ENCODE measurements at regions of chr3 and their contacts with region 1.

Region 1: DNA sequence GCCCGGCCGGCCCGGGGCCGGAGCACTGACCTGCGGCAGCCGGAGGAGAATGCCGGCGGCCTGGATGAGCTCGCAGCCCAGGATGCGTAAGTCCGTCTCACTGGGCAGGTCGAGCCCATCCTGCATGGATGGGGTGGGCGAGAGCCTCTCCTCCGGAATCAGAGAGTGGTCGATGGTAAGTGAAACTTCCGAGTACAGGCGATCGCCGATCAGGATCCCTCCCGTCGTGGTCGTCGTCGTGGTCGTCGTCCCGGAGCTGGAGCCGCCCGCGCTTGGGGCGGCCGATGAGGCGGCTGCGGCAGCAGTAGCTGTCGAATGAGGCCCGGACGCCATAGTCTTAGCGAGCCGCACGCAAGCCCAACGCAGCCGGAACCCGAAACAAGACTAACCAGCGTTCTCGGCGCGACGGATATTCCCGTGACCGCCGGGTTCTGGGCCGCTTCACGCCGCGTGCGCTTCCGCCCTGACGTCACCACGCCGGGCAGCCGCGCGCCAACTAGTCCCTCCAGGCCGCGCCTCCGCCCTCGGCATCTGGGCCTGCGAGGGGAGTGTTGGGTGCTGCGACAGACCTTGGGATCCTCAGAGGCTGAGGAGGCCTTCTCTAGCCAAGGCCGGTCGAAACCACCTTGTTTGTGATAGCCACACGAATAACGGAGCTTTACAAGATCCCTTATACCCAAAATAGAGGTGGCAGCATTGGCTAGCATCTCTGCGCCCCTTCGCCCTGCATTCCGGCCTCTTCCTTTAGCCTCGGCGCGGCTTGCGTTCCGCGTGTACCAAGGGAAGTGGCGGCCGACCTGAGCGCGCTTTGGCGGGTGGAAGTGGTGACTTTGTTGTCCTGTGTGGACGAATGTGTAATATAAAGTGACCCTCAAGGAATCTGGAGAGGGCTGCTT is at the start of gene CCNL1:
- DNase-seq: peak; percentile 86 to 98 (median 89)
- ATAC-seq: peak; percentile 92
- H3K4me3 ChIP-seq: peak within 1 kb of the TSS; percentile 91
- H3K27ac ChIP-seq: peak within 1 kb of the TSS; percentile 96
- H3K4me1 ChIP-seq: peaks cover 14 to 17% of the 10 kb centered on the region in 2 experiments
- H3K27me3 ChIP-seq: no peaks in the 10 kb centered on the region
- CTCF ChIP-seq: peak in 1 of 3 experiments; percentile 1; a peak in 1 of 6 replicates
- EP300 ChIP-seq: peak; percentile 80
- POLR2A ChIP-seq: peak; percentile 99
- RAD21 ChIP-seq: peak in 1 of 2 experiments; percentile 25; a peak in 1 of 4 replicates
- polyA plus RNA-seq, gene CCNL1: 16.1 to 32.4 TPM

Region 2: GRCh38 chr3:157119369-157119951 is 40.5 kb before region 1 on chr3:
- CTCF ChIA-PET with region 1: no interaction called
- POLR2A ChIA-PET with region 1: interaction called, 11 read pairs
- in situ Hi-C with region 1: no loop called
- intact Hi-C with region 1: no loop called
- DNase-seq: peak; percentile 56 to 88 (median 72)
- ATAC-seq: peak; percentile 81
- H3K4me3 ChIP-seq: no peak overlapping the region
- H3K27ac ChIP-seq: peak overlapping the region; percentile 64; the same call in 2 of the 3 replicates
- H3K4me1 ChIP-seq: peaks cover 20 to 48% of the 10 kb centered on the region in 2 experiments
- H3K27me3 ChIP-seq: no peaks in the 10 kb centered on the region
- CTCF ChIP-seq: no peak
- EP300 ChIP-seq: peak; percentile 91
- POLR2A ChIP-seq: peak; percentile 56
- RAD21 ChIP-seq: no peak

Region 3: DNA sequence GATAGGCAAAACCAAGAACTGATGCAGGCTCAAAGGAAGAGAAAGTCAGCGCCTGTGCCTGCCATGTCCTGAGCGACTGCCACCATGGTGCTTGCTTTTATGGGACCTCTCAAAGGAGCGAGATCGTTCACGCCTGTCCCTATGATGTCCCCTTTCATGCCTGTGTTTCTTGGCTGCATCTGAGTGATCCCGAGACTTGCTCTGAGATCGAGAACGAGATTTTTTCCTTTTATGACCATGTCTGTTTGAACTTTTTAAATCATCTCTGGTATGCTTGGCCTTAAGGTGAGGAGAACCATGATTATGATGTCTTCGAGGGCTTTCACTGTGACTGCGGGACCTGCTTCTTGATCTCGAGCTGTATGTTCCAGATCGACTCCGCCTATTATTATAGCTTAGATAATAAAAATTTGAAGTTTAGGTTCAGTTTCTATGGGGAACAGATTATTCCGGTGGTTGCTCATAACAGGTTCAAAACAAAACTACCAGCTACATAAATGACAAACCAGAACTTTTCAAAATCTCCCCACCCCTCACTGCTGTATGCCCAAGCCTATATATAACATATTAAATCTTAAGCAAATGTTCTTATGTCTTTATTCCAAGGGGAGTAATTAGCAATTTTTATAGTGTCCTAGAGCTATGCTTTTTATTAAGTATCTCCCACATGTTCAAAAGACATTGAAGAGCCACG is 11.7 kb before region 1 on chr3:
- CTCF ChIA-PET with region 1: no interaction called
- POLR2A ChIA-PET with region 1: interaction called, 38 read pairs
- in situ Hi-C with region 1: no loop called
- intact Hi-C with region 1: no loop called
- DNase-seq: no peak
- ATAC-seq: peak; percentile 16
- H3K4me3 ChIP-seq: no peak overlapping the region
- H3K27ac ChIP-seq: no peak overlapping the region
- H3K4me1 ChIP-seq: no peaks in the 10 kb centered on the region
- H3K27me3 ChIP-seq: no peaks in the 10 kb centered on the region
- CTCF ChIP-seq: no peak
- EP300 ChIP-seq: no peak
- POLR2A ChIP-seq: no peak
- RAD21 ChIP-seq: no peak

Region 4: GRCh38 chr3:157174649-157175498 is 14.9 kb after region 1 on chr3:
- CTCF ChIA-PET with region 1: interaction called, 8 read pairs
- POLR2A ChIA-PET with region 1: interaction called, 272 read pairs
- in situ Hi-C with region 1: no loop called
- intact Hi-C with region 1: loop called (anchors 1 kb)
- DNase-seq: peak; percentile 91 to 99 (median 92)
- ATAC-seq: peak; percentile 88
- H3K4me3 ChIP-seq: peak overlapping the region; percentile 67
- H3K27ac ChIP-seq: peak overlapping the region; percentile 97
- H3K4me1 ChIP-seq: peaks cover 14 to 17% of the 10 kb centered on the region in 2 experiments
- H3K27me3 ChIP-seq: no peaks in the 10 kb centered on the region
- CTCF ChIP-seq: no peak
- EP300 ChIP-seq: peak; percentile 70
- POLR2A ChIP-seq: peak; percentile 98
- RAD21 ChIP-seq: no peak

Region 5: GRCh38 chr3:157239082-157239704 is 79.2 kb after region 1 on chr3:
- CTCF ChIA-PET with region 1: no interaction called
- POLR2A ChIA-PET with region 1: interaction called, 6 read pairs
- in situ Hi-C with region 1: no loop called
- intact Hi-C with region 1: loop called (anchors 2 kb)
- DNase-seq: peak; percentile 48 to 79 (median 60)
- ATAC-seq: peak; percentile 99
- H3K4me3 ChIP-seq: no peak overlapping the region
- H3K27ac ChIP-seq: no peak overlapping the region
- H3K4me1 ChIP-seq: peaks cover 0 to 6% of the 10 kb centered on the region in 2 experiments; a peak in 1 of 5 replicates
- H3K27me3 ChIP-seq: no peaks in the 10 kb centered on the region
- CTCF ChIP-seq: peak; percentile 88 to 92 (median 91)
- EP300 ChIP-seq: no peak
- POLR2A ChIP-seq: no peak
- RAD21 ChIP-seq: peak; percentile 91 to 94

Measured in K562 (cell line).